GM13976 (cell line): ENCODE measurements at regions of chr6 and their contacts with region 1.

Region 1: GRCh38 chr6:37051138-37052026 is 45.9 kb downstream of the FGD2 start:
- DNase-seq: peak; percentile 89
- CTCF ChIP-seq: peak; percentile 88

Region 2: GRCh38 chr6:36592221-36592655 is 459.1 kb before region 1 on chr6:
- in situ Hi-C with region 1: no loop called
- DNase-seq: peak; percentile 54
- CTCF ChIP-seq: no peak

Region 3: DNA sequence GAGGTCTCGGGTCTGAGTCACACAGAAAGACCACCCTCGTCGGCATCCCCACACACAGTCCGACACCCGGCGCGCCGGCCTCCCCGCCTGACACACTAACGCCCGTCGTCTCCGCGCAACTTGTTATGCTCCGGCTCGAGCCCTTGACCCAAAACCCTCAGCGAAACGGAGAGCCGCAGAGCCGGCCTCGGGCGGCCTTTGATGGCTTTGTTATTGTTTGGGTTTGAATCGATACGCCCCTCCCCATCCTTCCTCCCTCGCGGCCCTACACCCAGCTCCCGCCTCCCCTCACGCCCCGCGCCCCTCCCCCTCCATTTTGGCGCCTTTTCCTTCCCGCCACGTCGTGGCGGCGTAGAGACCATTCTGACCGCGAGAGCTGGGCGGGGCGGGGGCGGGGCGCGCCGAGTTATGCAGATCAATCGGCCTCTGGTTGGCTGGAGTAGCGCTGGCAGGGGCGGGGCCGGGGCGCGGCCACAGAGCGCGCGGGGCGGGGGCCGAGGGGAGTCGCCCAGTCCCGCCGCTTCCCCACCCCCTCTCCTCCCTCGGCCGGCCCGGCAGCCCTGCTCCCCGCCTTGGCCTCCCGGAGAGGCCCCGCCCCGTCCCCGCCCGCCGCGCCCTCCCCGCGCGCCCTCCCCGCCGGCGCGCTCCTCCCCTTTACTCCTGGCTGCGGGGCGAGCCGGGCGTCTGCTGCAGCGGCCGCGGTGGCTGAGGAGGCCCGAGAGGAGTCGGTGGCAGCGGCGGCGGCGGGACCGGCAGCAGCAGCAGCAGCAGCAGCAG is 118.3 kb after region 1 on chr6 and contains the start of gene PIM1:
- in situ Hi-C with region 1: loop called (anchors 5 kb)
- DNase-seq: peak; percentile 99
- CTCF ChIP-seq: no peak